PC-9 (cell line): ENCODE measurements at regions of chr12 and their contacts with region 1.

Region 1: GRCh38 chr12:24991209-24992049 is 42.5 kb upstream of the BCAT1 start:
- DNase-seq: peak in 1 of 2 experiments; percentile 49
- H3K4me3 ChIP-seq: no peak overlapping the region
- H3K27ac ChIP-seq: no peak overlapping the region
- H3K4me1 ChIP-seq: no peaks in the 10 kb centered on the region
- H3K27me3 ChIP-seq: no peaks in the 10 kb centered on the region
- CTCF ChIP-seq: peak; percentile 82

Region 2: GRCh38 chr12:25009496-25010092 is 18.2 kb after region 1 on chr12:
- CTCF ChIA-PET with region 1: no interaction called
- POLR2A ChIA-PET with region 1: interaction called, 15 read pairs
- intact Hi-C with region 1: no loop called
- DNase-seq: no peak
- H3K4me3 ChIP-seq: no peak overlapping the region
- H3K27ac ChIP-seq: no peak overlapping the region
- H3K4me1 ChIP-seq: no peaks in the 10 kb centered on the region
- H3K27me3 ChIP-seq: no peaks in the 10 kb centered on the region
- CTCF ChIP-seq: no peak

Region 3: DNA sequence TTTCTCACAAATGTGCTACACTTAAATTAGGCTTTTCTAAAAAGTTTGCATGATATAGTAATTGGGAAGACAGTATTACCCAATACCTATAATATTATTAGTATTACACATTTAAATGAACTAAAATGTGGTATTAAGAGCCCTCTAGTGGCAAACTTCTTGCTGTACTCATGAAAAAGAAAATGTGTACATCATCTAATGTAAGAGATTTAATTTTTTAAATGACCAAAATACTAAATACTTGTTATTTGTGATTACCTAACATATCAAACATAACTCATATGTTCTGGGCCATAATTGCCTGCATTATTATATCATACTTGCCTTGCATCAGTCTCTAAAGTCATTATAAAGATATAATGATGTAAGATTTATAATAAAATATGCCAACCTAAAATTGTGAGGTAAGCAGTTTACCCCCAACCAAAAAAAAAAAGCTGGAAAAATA is 139.3 kb after region 1 on chr12:
- CTCF ChIA-PET with region 1: no interaction called
- POLR2A ChIA-PET with region 1: no interaction called
- intact Hi-C with region 1: loop called (anchors 2 kb)
- DNase-seq: no peak
- H3K4me3 ChIP-seq: no peak overlapping the region
- H3K27ac ChIP-seq: no peak overlapping the region
- H3K4me1 ChIP-seq: no peaks in the 10 kb centered on the region
- H3K27me3 ChIP-seq: no peaks in the 10 kb centered on the region
- CTCF ChIP-seq: peak; percentile 85

Region 4: DNA sequence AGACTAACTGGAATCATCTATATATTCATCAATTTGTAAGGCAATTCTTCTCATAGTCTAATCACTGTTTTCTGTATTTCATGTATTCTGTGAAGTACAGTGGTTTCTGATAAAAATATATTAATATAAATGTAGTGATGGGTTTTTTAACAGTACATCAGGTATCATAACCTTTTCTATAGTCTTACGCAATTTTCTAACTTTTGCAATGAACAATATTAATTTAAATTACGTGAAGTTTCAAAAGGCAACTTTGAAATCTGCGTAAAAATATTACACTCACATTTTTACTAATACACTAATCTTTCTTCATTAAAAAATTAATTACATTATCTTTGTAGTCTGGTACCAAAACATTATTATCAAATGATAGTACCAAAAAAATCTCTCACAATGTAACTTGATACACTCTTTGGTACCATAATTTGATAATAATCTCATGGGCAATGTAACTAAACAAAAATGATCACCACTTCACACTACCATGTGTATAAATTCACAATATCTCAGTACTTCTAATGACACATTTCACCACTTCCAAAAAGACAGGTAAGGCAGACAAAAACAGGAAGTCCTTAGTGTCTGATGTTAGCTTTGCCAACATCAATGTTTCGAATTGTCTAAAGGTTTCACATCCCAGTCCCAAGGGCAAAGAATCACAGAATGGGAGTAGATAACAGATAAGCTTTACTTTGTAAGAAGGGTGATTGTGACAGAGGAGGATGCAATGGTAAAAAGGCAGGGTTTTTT is 194.8 kb after region 1 on chr12:
- CTCF ChIA-PET with region 1: no interaction called
- POLR2A ChIA-PET with region 1: no interaction called
- intact Hi-C with region 1: no loop called
- DNase-seq: no peak
- H3K4me3 ChIP-seq: no peak overlapping the region
- H3K27ac ChIP-seq: no peak overlapping the region
- H3K4me1 ChIP-seq: no peaks in the 10 kb centered on the region
- H3K27me3 ChIP-seq: no peaks in the 10 kb centered on the region
- CTCF ChIP-seq: no peak

Region 5: DNA sequence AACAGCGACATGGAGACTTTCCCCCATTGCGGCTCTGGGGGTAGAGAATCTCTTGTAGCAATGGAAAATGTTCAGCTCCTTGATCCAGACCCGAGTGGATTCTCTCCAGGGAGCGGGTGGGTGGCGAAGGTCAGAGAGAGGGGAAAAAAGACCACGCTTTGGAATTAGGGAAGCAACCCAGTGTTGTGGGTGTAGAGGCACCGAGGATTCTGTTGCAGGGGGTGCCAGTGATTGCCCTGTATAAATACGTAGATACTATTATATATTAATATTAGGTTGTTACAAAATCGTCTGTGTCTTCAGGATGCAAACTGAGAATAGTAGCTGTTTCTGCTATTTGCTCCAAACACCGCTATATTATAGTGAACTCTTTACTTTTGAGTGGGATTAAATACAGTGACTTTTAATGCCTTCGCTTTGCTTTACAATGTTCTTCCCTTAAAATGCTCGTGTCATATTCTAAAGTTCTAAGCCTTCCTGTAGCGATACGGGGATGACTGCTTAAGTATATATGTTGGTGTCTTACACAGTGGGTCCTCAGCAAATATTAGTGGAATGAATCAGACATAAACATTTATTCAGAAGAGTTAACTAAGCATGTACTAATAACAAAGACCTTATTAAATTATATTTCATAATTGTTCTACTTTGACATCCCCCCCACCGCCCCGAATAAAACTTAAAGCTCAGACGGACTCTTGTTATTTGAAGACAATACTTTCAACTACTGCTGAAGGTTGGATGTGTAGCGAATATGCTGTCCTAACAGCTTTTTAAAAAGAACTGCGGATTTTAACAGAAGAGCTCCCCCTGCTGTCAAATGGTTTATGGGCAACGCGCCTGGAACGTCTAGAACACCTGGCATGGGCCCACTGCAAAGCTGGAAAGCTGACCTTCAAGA is 395.7 kb after region 1 on chr12:
- CTCF ChIA-PET with region 1: interaction called, 3 read pairs
- POLR2A ChIA-PET with region 1: no interaction called
- intact Hi-C with region 1: loop called (anchors 1 kb)
- DNase-seq: peak; percentile 68 to 83
- H3K4me3 ChIP-seq: peak overlapping the region; percentile 65
- H3K27ac ChIP-seq: no peak overlapping the region
- H3K4me1 ChIP-seq: 0 out of 2 replicates have a peak, but pooled peaks cover 6% of the 10 kb centered on the region
- H3K27me3 ChIP-seq: no peaks in the 10 kb centered on the region
- CTCF ChIP-seq: peak; percentile 91

Region 6: GRCh38 chr12:25458047-25458552 is 466.7 kb after region 1 on chr12:
- CTCF ChIA-PET with region 1: interaction called, 19 read pairs
- POLR2A ChIA-PET with region 1: no interaction called
- intact Hi-C with region 1: no loop called
- DNase-seq: peak; percentile 63 to 89
- H3K4me3 ChIP-seq: peak overlapping the region; percentile 24; the same call in 1 of the 2 replicates
- H3K27ac ChIP-seq: peak overlapping the region; percentile 67
- H3K4me1 ChIP-seq: peaks cover 22% of the 10 kb centered on the region
- H3K27me3 ChIP-seq: no peaks in the 10 kb centered on the region
- CTCF ChIP-seq: no peak

Region 7: DNA sequence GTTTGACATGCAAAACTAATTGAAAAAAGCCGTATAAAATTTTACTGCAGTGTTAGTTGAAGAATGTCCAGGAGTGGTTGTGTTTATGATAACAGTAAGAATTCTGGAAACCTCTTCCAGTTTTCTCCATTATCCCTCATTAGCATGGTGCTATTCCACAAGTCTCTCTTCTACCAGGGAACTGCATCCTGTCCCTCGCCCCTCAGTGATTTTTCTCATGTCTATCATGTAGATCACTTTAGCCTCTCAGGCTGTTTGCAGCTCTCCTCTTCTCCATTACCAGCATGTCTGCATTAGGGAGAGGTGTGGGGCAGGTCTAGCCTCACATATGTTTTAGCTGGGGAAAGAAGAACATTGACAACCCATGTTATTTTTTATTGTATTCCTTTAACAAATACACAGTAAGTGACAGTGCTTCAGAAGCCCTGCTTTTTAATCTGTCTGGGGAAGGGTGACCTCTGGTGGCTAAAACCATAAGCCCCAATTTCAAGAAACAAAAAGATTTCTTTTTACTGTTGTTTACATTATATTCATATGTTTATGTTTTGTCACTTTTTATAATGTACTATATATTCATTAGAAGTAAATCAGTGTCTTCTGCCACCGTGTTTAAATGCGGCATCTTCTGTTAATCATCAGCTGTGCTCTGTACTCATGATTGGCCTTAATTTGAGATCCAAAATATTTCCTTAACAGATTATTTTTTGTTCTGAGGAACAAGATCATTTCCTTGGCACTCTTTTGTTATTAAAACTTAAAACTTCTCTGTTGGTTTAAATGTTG is 1037.7 kb after region 1 on chr12:
- CTCF ChIA-PET with region 1: no interaction called
- POLR2A ChIA-PET with region 1: no interaction called
- intact Hi-C with region 1: loop called (anchors 1 kb)
- DNase-seq: peak in 1 of 2 experiments; percentile 42
- H3K4me3 ChIP-seq: no peak overlapping the region
- H3K27ac ChIP-seq: no peak overlapping the region
- H3K4me1 ChIP-seq: peaks cover 16% of the 10 kb centered on the region
- H3K27me3 ChIP-seq: no peaks in the 10 kb centered on the region
- CTCF ChIP-seq: peak; percentile 87

Region 8: DNA sequence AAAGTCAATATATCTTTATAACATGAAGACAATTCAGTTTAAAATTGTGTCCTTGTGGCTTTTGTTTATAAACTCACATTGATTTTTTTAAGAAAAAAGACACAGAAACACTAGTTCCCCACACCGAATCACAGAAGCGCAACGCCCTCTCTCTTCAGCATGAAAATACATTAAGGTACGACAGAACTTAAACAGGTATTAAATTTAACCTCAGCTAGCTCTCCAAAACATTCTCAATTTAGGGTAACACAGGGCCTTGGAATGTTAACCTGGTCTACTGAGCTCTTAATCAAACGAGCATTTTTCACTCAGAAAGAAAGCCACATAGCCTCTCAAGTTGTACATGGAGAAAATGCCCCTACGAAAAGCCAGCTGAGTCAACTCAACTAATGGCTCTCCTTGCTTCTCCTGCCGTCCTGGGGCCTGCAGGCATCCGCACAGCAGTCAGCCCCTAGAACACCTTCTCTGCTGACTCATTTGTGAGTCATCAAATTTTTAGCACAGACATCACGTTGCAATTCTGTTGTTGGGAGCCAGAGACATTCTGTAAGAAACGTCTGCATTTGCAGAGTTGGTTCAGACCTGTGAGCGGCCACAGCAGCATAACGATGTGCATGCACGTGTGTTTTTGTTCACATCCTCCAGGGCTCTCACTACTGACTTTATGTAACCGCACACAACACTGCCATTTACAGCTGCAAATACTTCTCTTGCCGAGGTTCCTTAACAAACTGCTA is 1700.0 kb after region 1 on chr12:
- CTCF ChIA-PET with region 1: no interaction called
- POLR2A ChIA-PET with region 1: no interaction called
- intact Hi-C with region 1: loop called (anchors 10 kb)
- DNase-seq: peak; percentile 69 to 88
- H3K4me3 ChIP-seq: peak overlapping the region; percentile 6; the same call in 1 of the 2 replicates
- H3K27ac ChIP-seq: peak overlapping the region; percentile 44
- H3K4me1 ChIP-seq: peaks cover 16% of the 10 kb centered on the region
- H3K27me3 ChIP-seq: no peaks in the 10 kb centered on the region
- CTCF ChIP-seq: no peak